Activated naive CD4-positive, alpha-beta T cell treated with anti-CD3 and anti-CD28 coated beads for 36 hours (primary cell): ENCODE measurements at regions of chr14 and their contacts with region 1.

Region 1: GRCh38 chr14:37594238-37594914 is 673 bp downstream of the FOXA1 start:
- DNase-seq: peak; percentile 72
- H3K4me3 Mint-ChIP-seq: peak overlapping the region; percentile 53
- H3K27ac Mint-ChIP-seq: peak overlapping the region; percentile 47
- H3K4me1 Mint-ChIP-seq: peaks cover 34% of the 10 kb centered on the region
- H3K27me3 Mint-ChIP-seq: peaks cover 74% of the 10 kb centered on the region

Region 2: GRCh38 chr14:35932659-35933322 is 1661.6 kb before region 1 on chr14:
- CTCF ChIA-PET with region 1: no interaction called
- intact Hi-C with region 1: loop called (anchors 10 kb)
- DNase-seq: peak; percentile 74
- H3K4me3 Mint-ChIP-seq: peak overlapping the region; percentile 52
- H3K27ac Mint-ChIP-seq: peak overlapping the region; percentile 20
- H3K4me1 Mint-ChIP-seq: peaks cover 31% of the 10 kb centered on the region
- H3K27me3 Mint-ChIP-seq: no peaks in the 10 kb centered on the region

Region 3: DNA sequence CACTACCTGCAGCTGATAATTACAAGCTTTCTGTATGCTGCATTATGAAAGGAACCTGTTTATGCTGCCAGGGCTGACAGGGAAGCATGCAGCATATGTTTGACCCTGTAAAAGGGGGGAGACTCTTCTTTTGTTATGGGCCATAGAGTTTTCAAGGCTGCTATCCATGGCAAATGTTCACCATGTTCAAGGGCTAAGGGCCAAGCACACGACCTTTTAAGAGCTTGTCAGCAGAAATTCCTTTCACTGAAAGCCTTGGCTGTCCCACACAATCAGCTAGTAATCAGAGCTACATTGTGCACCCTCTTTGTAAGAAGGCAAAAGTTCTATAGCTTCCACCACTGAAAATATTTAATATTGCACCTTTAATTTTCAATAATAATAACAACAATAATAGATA is 1199.8 kb before region 1 on chr14:
- CTCF ChIA-PET with region 1: no interaction called
- intact Hi-C with region 1: no loop called
- DNase-seq: no peak
- H3K4me3 Mint-ChIP-seq: no peak overlapping the region
- H3K27ac Mint-ChIP-seq: no peak overlapping the region
- H3K4me1 Mint-ChIP-seq: no peaks in the 10 kb centered on the region
- H3K27me3 Mint-ChIP-seq: peaks cover 23% of the 10 kb centered on the region

Region 4: GRCh38 chr14:36582011-36582873 is 1012.1 kb before region 1 on chr14 and contains the start of gene NKX2-8:
- CTCF ChIA-PET with region 1: no interaction called
- intact Hi-C with region 1: loop called (anchors 5 kb)
- DNase-seq: no peak
- H3K4me3 Mint-ChIP-seq: no peak within 1 kb of the TSS
- H3K27ac Mint-ChIP-seq: no peak within 1 kb of the TSS
- H3K4me1 Mint-ChIP-seq: peaks cover 2% of the 10 kb centered on the region
- H3K27me3 Mint-ChIP-seq: peaks cover 76% of the 10 kb centered on the region
- total RNA-seq, gene NKX2-8: not detected

Region 5: GRCh38 chr14:37246427-37246914 is 347.9 kb before region 1 on chr14:
- CTCF ChIA-PET with region 1: no interaction called
- intact Hi-C with region 1: loop called (anchors 1 kb)
- DNase-seq: no peak
- H3K4me3 Mint-ChIP-seq: no peak overlapping the region
- H3K27ac Mint-ChIP-seq: no peak overlapping the region
- H3K4me1 Mint-ChIP-seq: no peaks in the 10 kb centered on the region
- H3K27me3 Mint-ChIP-seq: no peaks in the 10 kb centered on the region

Region 6: DNA sequence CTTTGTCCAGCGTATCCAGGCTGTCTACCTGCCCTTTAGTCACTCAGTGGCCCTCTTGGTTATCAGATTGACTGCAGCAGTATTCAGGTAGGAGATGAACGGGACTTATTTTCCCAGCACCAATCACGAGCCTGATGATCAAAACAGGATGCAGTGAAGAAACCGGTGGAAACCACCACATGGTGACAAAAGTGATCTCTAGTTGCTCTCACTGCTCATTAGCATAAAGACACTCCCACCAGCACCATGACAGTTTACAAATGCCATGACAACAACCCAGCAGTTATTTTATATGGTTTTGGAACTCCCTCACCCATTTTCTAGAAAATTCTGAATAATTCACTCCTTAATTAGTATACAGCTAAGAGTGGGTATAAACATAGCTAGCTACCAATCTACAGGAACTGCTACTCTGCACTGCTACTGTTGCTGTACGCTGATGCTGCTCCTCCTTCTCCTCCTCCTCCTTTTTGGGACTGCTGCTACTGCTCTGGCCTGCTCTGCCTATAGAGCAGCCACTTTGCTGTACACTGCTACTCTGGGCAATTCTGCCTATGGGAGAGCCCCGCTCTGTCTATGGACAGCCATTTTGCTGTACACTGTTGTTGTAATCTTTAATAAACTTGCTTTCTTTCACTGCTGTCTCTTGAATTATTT is 470.9 kb after region 1 on chr14:
- CTCF ChIA-PET with region 1: no interaction called
- intact Hi-C with region 1: loop called (anchors 1 kb)
- DNase-seq: peak; percentile 81
- H3K4me3 Mint-ChIP-seq: peak overlapping the region; percentile 70
- H3K27ac Mint-ChIP-seq: peak overlapping the region; percentile 87
- H3K4me1 Mint-ChIP-seq: peaks cover 31% of the 10 kb centered on the region
- H3K27me3 Mint-ChIP-seq: no peaks in the 10 kb centered on the region

Region 7: GRCh38 chr14:39266871-39267591 is 1672.7 kb after region 1 on chr14:
- CTCF ChIA-PET with region 1: no interaction called
- intact Hi-C with region 1: loop called (anchors 5 kb)
- DNase-seq: peak; percentile 68
- H3K4me3 Mint-ChIP-seq: peak overlapping the region; percentile 72
- H3K27ac Mint-ChIP-seq: peak overlapping the region; percentile 93
- H3K4me1 Mint-ChIP-seq: peaks cover 48% of the 10 kb centered on the region
- H3K27me3 Mint-ChIP-seq: no peaks in the 10 kb centered on the region